ENCODE measurements at regions of chr6 and their contacts with region 1.

Region 1: GRCh38 chr6:82331031-82331773 is 32.4 kb upstream of the TPBG start:
- DNase-seq: peak; percentile 94
- H3K4me3 Mint-ChIP-seq: peak overlapping the region; percentile 68
- H3K27ac Mint-ChIP-seq: peak overlapping the region; percentile 91
- H3K4me1 Mint-ChIP-seq: peaks cover 34% of the 10 kb centered on the region
- H3K27me3 Mint-ChIP-seq: no peaks in the 10 kb centered on the region
- CTCF ChIP-seq: peak; percentile 38

Region 2: GRCh38 chr6:82205930-82206392 is 125.2 kb before region 1 on chr6:
- CTCF ChIA-PET with region 1: no interaction called
- POLR2A ChIA-PET with region 1: no interaction called
- intact Hi-C with region 1: no loop called
- DNase-seq: no peak
- H3K4me3 Mint-ChIP-seq: no peak overlapping the region
- H3K27ac Mint-ChIP-seq: peak overlapping the region; percentile 8
- H3K4me1 Mint-ChIP-seq: peaks cover 11% of the 10 kb centered on the region
- H3K27me3 Mint-ChIP-seq: no peaks in the 10 kb centered on the region
- CTCF ChIP-seq: no peak

Region 3: DNA sequence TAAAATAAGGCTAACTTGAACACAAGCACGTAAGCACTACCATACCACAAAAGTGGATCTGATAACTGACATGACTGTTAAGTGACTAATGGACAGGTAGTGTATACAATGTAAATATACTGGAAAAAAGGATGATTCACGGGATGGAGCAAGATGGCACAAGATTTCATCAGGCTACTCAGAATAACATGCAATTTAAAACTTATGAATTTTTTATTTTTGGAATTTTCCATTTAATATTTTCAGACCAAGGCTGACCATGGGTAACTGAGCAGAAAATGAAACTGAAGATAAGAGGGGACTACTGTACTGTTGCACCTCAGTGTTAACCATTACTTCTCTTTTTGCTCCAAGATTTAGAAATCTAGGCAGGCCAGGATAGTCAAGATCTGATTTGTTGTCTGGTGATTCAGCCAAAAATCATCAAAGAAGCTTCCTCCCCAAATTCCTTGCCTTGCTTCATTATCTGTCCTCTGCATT is 77.8 kb after region 1 on chr6:
- CTCF ChIA-PET with region 1: no interaction called
- POLR2A ChIA-PET with region 1: no interaction called
- intact Hi-C with region 1: no loop called
- DNase-seq: peak; percentile 90
- H3K4me3 Mint-ChIP-seq: peak overlapping the region; percentile 22
- H3K27ac Mint-ChIP-seq: peak overlapping the region; percentile 95
- H3K4me1 Mint-ChIP-seq: peaks cover 47% of the 10 kb centered on the region
- H3K27me3 Mint-ChIP-seq: no peaks in the 10 kb centered on the region
- CTCF ChIP-seq: no peak

Region 4: DNA sequence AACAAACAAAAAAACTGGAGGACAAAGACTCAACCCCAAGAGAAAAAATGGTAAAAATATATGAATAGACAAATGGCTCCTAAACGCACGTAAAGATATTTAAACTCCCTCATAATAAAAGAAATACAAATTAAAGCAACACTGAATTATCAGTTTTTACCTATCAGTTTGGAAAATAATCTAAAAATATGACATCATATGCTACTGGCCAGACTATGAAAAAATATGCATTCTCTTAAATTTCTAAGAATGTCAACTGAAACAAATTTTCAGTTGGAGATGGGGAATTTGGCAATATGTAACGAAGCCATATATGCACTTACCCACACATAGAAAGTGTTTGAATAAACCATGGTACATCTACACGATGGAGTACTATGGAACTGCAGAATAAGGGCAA is 210.1 kb after region 1 on chr6:
- CTCF ChIA-PET with region 1: interaction called, 4 read pairs
- POLR2A ChIA-PET with region 1: no interaction called
- intact Hi-C with region 1: loop called (anchors 1 kb)
- DNase-seq: no peak
- H3K4me3 Mint-ChIP-seq: no peak overlapping the region
- H3K27ac Mint-ChIP-seq: no peak overlapping the region
- H3K4me1 Mint-ChIP-seq: no peaks in the 10 kb centered on the region
- H3K27me3 Mint-ChIP-seq: no peaks in the 10 kb centered on the region
- CTCF ChIP-seq: no peak

Region 5: DNA sequence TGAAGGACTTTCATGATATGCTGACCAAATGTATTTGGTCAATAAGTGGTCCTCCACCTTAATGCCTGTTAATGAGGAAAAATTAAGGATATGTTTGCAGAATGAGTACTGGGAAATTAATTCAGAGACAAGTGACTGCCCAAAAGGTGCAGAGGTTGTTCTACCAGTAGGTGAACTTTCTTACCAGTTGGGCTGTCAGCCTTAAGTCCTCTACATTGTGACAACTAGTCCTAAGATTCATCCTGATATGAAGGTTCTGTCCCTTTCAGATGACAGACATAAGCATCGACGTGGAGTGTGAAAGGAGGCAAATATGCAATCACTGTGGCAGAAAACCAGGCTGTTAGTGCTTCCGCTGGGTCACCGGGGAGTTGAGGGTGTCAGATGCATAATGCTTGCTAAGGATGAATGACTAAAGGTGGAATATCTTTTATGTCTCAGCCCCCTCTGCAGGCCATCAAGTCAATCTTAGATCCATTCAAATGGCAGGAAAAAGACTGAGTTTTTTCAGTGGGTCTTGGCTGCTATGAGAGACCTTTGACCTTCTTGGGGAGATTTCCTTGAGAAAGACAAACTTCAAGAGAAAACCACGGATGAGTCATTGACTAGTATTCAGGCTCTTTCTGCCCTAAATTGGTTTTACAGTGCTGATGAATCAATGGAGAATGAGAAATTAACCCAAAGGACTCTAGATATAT is 258.5 kb after region 1 on chr6:
- CTCF ChIA-PET with region 1: no interaction called
- POLR2A ChIA-PET with region 1: no interaction called
- intact Hi-C with region 1: loop called (anchors 1 kb)
- DNase-seq: peak; percentile 72
- H3K4me3 Mint-ChIP-seq: no peak overlapping the region
- H3K27ac Mint-ChIP-seq: no peak overlapping the region
- H3K4me1 Mint-ChIP-seq: no peaks in the 10 kb centered on the region
- H3K27me3 Mint-ChIP-seq: no peaks in the 10 kb centered on the region
- CTCF ChIP-seq: peak; percentile 30

Measured in MCF 10A (cell line).